ENCODE measurements at regions of chr22 and their contacts with region 1.

Region 1: DNA sequence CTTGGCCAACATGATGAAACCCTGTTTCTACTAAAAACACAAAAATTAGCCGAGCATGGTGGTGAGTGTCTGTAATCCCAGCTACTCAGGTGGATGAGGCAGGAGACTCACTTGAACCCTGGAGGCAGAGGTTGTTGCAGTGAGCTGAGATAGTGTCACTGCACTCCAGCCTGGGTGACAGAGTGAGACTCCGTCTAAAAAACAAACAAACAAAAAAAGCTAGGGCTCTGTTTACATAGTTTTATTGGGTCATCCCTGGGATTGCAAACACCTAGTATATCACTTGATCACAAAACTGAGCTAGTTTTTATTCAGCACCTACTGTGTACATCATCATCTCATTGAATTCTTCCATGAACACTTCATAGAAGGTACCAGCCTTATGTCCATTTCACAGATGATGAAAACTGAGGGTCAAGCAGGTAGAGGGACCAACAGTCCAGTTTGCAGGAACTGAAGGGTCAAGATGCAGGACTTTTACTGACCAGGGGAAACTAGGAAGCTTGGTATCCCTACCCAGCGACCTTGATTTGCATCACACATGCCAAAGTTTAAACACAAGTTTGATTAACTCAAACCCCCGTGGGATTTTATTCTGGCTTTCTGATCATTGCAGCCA is 9.2 kb upstream of the MRTFA start:
- DNase-seq: no peak
- ATAC-seq: no peak
- H3K4me3 Mint-ChIP-seq: no peak overlapping the region
- H3K27ac Mint-ChIP-seq: no peak overlapping the region
- H3K4me1 Mint-ChIP-seq: peaks cover 5% of the 10 kb centered on the region
- H3K27me3 Mint-ChIP-seq: no peaks in the 10 kb centered on the region
- CTCF ChIP-seq: no peak

Region 2: GRCh38 chr22:40525249-40525884 is 120.3 kb before region 1 on chr22:
- CTCF ChIA-PET with region 1: interaction called, 20 read pairs
- POLR2A ChIA-PET with region 1: no interaction called
- DNase-seq: peak; percentile 64
- ATAC-seq: peak; percentile 61
- H3K4me3 Mint-ChIP-seq: no peak overlapping the region
- H3K27ac Mint-ChIP-seq: peak overlapping the region; percentile 72; the same call in 1 of the 2 replicates
- H3K4me1 Mint-ChIP-seq: no peaks in the 10 kb centered on the region
- H3K27me3 Mint-ChIP-seq: no peaks in the 10 kb centered on the region
- CTCF ChIP-seq: peak; percentile 85

Region 3: DNA sequence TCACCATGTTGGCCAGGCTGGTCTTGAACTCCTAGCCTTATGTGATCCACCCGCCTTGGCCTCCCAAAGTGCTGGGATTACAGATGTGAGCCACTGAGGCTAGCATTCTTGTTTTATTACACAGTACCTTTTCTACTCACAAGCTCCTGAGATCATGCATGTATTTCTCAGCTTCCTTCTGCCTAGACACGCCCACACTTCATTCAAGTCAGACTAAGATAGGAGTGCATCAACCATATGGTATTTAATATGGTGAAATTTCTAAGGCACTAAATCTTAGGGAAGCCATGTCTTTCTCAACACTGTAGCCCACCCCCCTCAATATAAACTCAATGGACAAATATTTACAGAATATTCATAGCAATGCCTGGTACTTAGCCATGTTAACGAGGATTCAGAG is 111.4 kb after region 1 on chr22:
- CTCF ChIA-PET with region 1: interaction called, 12 read pairs
- POLR2A ChIA-PET with region 1: no interaction called
- DNase-seq: no peak
- ATAC-seq: no peak
- H3K4me3 Mint-ChIP-seq: no peak overlapping the region
- H3K27ac Mint-ChIP-seq: no peak overlapping the region
- H3K4me1 Mint-ChIP-seq: peaks cover 44% of the 10 kb centered on the region
- H3K27me3 Mint-ChIP-seq: no peaks in the 10 kb centered on the region; the same call in 1 of the 2 replicates
- CTCF ChIP-seq: no peak

Region 4: DNA sequence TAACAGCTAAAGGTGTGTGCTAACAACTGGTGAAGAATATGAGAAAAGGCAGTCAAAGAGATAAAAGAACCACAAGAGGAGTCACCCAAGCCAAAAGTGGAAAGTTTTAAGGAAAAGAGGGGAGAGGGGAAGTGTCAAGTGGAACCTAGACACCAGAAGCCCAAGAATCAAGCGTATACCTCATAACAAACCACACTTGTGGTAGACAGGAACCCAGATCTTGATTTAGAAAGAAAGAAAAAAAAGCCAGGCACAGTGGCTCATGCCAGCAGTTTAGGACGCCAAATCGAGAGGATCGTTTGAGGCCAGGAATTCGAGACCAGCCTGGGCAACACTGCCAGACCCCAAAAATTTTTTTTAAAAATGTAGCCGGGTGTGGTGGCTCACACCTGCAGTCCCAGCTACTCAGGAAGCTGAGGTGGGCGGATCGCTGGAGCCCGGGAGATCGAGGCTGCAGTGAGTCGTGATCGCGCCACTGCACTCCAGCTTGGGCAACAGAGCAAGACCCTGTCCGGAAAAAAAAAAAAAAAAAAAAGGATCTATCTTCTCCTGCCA is 172.6 kb after region 1 on chr22:
- CTCF ChIA-PET with region 1: no interaction called
- POLR2A ChIA-PET with region 1: no interaction called
- DNase-seq: no peak
- ATAC-seq: no peak
- H3K4me3 Mint-ChIP-seq: peak overlapping the region; percentile 92
- H3K27ac Mint-ChIP-seq: peak overlapping the region; percentile 79
- H3K4me1 Mint-ChIP-seq: peaks cover 24% of the 10 kb centered on the region
- H3K27me3 Mint-ChIP-seq: no peaks in the 10 kb centered on the region
- CTCF ChIP-seq: no peak

Region 5: DNA sequence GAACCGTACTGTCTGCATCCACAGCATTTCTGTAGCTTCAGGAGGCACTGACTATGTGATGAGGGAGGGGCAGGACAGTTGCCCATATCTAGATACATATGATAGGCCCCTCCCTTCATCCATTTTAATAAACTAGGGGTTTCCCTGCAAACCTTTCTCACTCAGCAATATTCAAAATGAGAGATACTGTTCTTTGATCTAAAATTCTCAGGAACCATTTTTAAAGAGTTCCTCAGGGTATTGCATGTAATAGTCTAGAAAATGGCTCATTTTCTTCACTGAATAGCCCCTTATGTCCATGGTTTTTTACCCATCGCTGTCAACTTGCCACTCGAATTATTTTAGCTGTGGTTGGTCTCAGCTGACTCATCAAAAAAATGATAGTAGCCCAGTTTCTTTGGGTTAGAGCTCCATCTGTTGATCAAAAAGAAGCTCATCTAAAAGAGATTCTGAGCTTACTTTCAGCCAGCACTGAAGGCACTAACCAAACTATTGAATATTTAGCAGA is 253.2 kb after region 1 on chr22:
- CTCF ChIA-PET with region 1: interaction called, 14 read pairs
- POLR2A ChIA-PET with region 1: no interaction called
- DNase-seq: no peak
- ATAC-seq: no peak
- H3K4me3 Mint-ChIP-seq: no peak overlapping the region
- H3K27ac Mint-ChIP-seq: no peak overlapping the region; the same call in 1 of the 2 replicates
- H3K4me1 Mint-ChIP-seq: 0 out of 2 replicates have a peak, but pooled peaks cover 2% of the 10 kb centered on the region
- H3K27me3 Mint-ChIP-seq: no peaks in the 10 kb centered on the region; the same call in 1 of the 2 replicates
- CTCF ChIP-seq: no peak

Measured in WTC11 (cell line).